ENCODE measurements at regions of chr10 and their contacts with region 1.

Region 1: DNA sequence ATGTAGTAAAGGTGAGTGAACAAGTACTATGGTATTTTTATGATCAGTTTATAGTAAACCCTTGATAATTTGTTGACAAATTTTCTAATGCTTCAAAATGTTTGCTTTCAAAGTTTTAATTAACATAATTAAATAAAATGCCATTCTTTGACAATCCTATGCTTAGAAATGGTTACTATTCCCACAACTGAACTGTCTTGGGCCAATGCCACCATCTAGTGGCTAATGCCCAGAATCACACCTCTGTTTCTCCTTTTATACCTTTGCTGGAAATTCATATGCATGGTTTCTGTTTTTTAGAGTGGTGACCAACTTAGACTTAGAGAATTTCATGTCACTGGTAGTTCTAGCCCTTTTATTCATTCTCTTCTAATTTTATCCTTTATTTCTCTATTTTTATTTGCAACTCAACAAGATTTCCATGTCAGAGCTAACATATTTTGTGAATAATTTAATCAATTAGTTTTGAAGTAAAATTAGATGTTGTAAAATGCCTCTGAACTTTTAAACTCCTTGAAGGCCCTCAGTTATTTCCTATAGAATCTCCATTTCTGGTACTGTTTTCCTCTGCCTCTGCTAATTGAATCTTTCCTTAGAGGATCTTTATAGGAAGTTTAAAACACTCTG is 31.1 kb downstream of the PCGF5 start:
- DNase-seq: peak; percentile 64
- ATAC-seq: peak; percentile 70
- H3K4me3 Mint-ChIP-seq: no peak overlapping the region
- H3K27ac Mint-ChIP-seq: no peak overlapping the region
- H3K4me1 Mint-ChIP-seq: peaks cover 8% of the 10 kb centered on the region
- H3K27me3 Mint-ChIP-seq: no peaks in the 10 kb centered on the region

Region 2: DNA sequence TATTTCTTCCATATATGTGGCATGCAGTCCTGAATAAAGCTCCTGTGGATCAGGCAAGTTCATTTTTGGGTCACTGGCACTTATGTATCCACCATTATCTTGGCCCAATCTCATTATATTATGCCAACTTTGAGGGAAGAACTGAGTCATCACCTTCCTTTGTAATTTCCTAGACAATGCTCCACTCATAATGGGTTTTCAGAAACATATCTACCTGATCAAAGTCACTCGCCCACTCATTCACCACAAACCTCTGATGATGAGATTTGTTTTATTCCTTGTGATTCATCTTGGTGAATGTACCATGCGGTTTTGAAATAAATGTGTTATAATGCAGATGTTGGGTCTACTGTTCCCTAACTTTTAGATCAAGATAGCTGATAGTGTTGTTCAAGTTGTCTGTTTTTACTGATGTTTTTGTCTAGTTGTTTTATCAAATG is 1024.3 kb before region 1 on chr10:
- CTCF ChIA-PET with region 1: no interaction called
- POLR2A ChIA-PET with region 1: no interaction called
- DNase-seq: no peak
- ATAC-seq: no peak
- H3K4me3 Mint-ChIP-seq: no peak overlapping the region
- H3K27ac Mint-ChIP-seq: no peak overlapping the region
- H3K4me1 Mint-ChIP-seq: peaks cover 4% of the 10 kb centered on the region
- H3K27me3 Mint-ChIP-seq: no peaks in the 10 kb centered on the region

Region 3: GRCh38 chr10:90912174-90912573 is 339.4 kb before region 1 on chr10:
- CTCF ChIA-PET with region 1: interaction called, 61 read pairs
- POLR2A ChIA-PET with region 1: no interaction called
- DNase-seq: no peak
- ATAC-seq: no peak
- H3K4me3 Mint-ChIP-seq: no peak overlapping the region
- H3K27ac Mint-ChIP-seq: no peak overlapping the region
- H3K4me1 Mint-ChIP-seq: peaks cover 2% of the 10 kb centered on the region
- H3K27me3 Mint-ChIP-seq: peaks cover 7% of the 10 kb centered on the region

Region 4: DNA sequence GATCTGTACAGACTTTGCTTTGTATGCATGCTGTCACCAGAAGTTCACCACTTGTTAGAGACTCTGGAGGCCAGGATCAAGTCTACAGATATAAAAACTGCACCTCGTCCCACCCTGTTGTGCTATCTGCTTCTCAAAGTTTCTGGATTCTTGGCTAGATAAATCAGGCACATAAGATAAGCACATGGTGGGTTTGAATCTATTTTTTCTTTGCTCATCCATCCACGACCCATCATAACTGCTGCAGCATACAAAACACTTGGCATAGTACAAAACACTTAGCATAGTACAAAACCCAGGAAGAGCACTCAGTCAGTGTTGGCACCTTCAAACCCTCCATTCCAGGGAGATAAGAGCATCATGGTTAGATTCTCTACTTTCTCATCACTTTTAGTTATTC is 288.2 kb before region 1 on chr10:
- CTCF ChIA-PET with region 1: no interaction called
- POLR2A ChIA-PET with region 1: no interaction called
- DNase-seq: no peak
- ATAC-seq: no peak
- H3K4me3 Mint-ChIP-seq: no peak overlapping the region
- H3K27ac Mint-ChIP-seq: no peak overlapping the region
- H3K4me1 Mint-ChIP-seq: no peaks in the 10 kb centered on the region
- H3K27me3 Mint-ChIP-seq: peaks cover 5% of the 10 kb centered on the region

Region 5: DNA sequence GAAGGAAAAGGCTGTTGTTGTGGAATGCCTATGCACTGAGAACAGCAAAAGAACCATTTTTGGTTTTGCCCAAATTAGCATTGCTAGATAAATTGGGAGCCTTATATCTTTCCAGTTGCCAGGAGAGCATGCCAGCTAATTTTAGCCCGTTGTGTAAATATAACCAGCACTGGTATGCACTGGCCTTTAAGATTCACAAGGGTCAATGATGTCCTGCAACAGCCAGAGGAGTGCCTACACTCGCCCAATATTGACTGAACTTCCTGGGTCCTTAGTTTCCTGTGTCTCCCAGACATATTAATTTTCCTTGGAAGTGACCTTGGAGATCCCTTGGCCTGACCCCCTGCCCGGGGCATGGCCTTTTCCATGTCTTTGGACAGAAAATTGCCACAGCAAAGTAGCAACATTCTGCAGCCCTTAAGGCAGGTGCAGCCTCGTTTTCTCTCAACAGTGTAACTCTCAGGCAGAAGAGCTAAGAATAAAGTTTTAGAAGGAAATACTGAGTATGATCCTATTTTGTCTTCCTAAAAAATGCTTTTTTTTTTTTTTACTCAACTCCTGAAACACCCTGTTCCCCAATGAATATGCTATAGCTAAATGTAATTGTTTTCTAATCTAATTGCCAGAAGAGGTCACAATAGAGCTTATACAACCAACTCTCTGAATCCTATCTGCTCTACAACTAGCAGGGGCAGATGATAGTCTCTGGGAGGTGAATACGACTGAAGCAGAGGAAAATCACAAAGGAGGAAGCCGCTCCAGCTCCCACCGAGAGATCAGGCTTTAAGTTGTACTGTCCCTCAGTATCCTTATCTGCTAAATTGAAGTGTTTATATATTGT is 163.0 kb before region 1 on chr10:
- CTCF ChIA-PET with region 1: interaction called, 52 read pairs
- POLR2A ChIA-PET with region 1: no interaction called
- DNase-seq: no peak
- ATAC-seq: no peak
- H3K4me3 Mint-ChIP-seq: no peak overlapping the region
- H3K27ac Mint-ChIP-seq: no peak overlapping the region
- H3K4me1 Mint-ChIP-seq: no peaks in the 10 kb centered on the region
- H3K27me3 Mint-ChIP-seq: peaks cover 2% of the 10 kb centered on the region

Region 6: DNA sequence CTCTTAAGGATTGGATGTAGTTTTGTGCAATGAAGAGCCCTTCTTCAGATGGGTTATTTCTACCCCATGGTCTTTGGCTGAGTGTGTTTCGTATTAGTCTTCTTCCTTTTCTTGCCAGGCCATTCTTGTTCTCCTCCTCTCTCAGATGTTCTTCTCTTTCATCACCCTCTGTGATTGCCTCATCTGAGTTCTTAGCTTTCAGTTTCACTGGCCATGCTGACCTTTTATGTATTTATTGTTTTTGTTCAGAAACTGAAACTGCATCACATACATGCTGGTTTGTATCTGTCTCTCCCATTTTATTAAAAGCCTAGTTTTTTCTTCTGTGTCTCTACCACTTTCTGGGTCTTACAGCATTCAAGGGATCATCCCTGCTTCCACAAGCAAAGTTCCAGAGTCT is 52.8 kb before region 1 on chr10:
- CTCF ChIA-PET with region 1: interaction called, 13 read pairs
- POLR2A ChIA-PET with region 1: interaction called, 3 read pairs
- DNase-seq: peak; percentile 53
- ATAC-seq: peak; percentile 59
- H3K4me3 Mint-ChIP-seq: peak overlapping the region; percentile 2
- H3K27ac Mint-ChIP-seq: peak overlapping the region; percentile 76
- H3K4me1 Mint-ChIP-seq: peaks cover 75% of the 10 kb centered on the region
- H3K27me3 Mint-ChIP-seq: no peaks in the 10 kb centered on the region